ENCODE measurements at regions of chr2 and their contacts with region 1.

Region 1: GRCh38 chr2:195575879-195576401 is 81.1 kb upstream of the SLC39A10 start:
- DNase-seq: no peak

Region 2: DNA sequence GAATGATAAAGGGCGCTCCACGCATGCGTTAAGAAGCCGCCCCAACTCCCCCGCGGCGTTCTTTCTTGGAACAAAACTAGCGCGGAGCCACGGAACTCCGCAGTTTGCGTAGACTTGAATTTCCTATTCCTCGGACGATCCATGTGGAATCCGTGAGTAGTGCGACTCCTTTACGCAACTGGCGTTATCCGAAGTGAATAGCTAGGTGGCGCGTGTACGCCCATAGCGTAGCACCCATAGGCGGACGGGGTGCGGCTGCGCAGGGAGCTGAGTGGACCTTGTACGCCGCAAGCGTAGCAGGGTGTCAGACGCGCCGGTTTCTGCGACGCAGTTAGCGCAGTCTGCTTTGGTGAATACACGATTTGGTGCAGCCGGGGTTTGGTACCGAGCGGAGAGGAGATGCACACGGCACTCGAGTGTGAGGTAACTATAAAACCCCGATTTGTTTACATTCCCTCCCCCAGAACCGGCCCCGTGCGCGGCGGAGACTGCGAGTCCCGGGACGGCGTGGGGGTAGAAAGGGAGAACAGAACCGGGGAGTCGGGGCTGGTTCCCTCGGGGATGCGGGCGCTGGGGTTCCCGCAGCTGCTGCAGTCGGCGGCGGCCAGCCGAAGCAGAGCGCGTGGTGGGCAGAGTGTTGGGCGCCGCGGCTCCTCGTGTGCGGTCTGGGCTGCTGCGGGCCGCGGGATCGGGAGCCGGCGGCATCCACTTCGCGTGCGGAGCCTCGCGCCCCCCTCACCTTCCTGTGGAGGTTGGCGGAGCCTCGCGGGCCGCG is 81.1 kb after region 1 on chr2 and contains the start of gene SLC39A10:
- intact Hi-C with region 1: loop called (anchors 10 kb)
- DNase-seq: peak; percentile 96 to 99 (median 98)

Region 3: GRCh38 chr2:195945061-195945460 is 369.1 kb after region 1 on chr2:
- intact Hi-C with region 1: no loop called
- DNase-seq: no peak